ENCODE measurements at regions of chr3 and their contacts with region 1.

Region 1: GRCh38 chr3:112303764-112304325 is 9.8 kb upstream of the SLC9C1 start:
- DNase-seq: no peak
- CTCF ChIP-seq: no peak

Region 2: GRCh38 chr3:112314649-112315048 is 10.8 kb after region 1 on chr3:
- CTCF ChIA-PET with region 1: interaction called, 22 read pairs
- POLR2A ChIA-PET with region 1: no interaction called
- DNase-seq: no peak
- CTCF ChIP-seq: no peak

Region 3: DNA sequence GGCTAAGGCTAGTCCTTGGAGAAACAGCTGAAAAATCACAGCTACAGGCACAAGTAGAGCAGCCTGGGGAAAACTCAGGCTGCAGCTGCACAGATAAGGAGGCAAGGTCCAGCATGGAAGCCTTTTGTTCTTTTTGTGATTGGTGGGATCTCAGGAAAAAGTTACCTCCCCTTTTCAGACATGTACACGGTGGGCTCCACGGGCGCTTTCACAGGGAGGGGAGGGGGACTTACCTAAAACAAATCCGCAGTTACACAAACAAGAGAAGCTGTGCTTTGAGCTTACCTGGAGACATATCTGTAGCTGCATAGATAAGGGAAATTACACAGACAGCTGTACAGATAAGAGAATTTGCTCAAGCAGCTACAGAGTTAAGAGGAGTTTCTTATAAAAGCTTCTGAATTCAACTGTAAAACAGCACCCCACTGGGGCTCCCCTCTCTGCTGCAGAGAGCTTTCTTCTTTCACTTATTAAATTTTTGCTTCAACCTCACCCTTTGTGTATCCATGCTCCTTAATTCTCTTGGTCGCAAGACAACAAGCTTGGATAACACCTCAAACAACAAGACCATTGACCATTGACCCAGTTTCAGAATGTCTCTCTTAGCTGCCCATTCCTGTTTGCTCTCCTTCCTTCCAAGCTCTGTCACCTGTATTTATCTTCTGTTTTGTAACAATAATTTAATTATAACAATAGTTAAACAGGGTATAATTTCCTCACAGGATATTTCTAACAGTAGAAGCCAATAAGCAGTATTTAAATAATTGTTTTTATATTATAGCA is 18.2 kb after region 1 on chr3:
- CTCF ChIA-PET with region 1: interaction called, 15 read pairs
- POLR2A ChIA-PET with region 1: no interaction called
- DNase-seq: no peak
- CTCF ChIP-seq: no peak